ENCODE measurements at regions of chr2 and their contacts with region 1.

Region 1: GRCh38 chr2:88055371-88056128 is at the start of gene KRCC1:
- DNase-seq: peak; percentile 91 to 98
- ATAC-seq: peak; percentile 93 to 97 (median 94)
- H3K4me3 ChIP-seq: peak within 1 kb of the TSS; percentile 65
- H3K4me3 Mint-ChIP-seq: peak within 1 kb of the TSS; percentile 94
- H3K27ac ChIP-seq: peak within 1 kb of the TSS; percentile 87
- H3K27ac Mint-ChIP-seq: peak within 1 kb of the TSS; percentile 90 to 99
- H3K4me1 ChIP-seq: peaks cover 16% of the 10 kb centered on the region
- H3K4me1 Mint-ChIP-seq: peaks cover 41 to 42% of the 10 kb centered on the region in 2 donors
- H3K27me3 ChIP-seq: no peaks in the 10 kb centered on the region
- H3K27me3 Mint-ChIP-seq: no peaks in the 10 kb centered on the region
- CTCF ChIP-seq: no peak
- total RNA-seq, gene KRCC1: 9.0 to 17.0 (median 10.5) TPM

Region 2: DNA sequence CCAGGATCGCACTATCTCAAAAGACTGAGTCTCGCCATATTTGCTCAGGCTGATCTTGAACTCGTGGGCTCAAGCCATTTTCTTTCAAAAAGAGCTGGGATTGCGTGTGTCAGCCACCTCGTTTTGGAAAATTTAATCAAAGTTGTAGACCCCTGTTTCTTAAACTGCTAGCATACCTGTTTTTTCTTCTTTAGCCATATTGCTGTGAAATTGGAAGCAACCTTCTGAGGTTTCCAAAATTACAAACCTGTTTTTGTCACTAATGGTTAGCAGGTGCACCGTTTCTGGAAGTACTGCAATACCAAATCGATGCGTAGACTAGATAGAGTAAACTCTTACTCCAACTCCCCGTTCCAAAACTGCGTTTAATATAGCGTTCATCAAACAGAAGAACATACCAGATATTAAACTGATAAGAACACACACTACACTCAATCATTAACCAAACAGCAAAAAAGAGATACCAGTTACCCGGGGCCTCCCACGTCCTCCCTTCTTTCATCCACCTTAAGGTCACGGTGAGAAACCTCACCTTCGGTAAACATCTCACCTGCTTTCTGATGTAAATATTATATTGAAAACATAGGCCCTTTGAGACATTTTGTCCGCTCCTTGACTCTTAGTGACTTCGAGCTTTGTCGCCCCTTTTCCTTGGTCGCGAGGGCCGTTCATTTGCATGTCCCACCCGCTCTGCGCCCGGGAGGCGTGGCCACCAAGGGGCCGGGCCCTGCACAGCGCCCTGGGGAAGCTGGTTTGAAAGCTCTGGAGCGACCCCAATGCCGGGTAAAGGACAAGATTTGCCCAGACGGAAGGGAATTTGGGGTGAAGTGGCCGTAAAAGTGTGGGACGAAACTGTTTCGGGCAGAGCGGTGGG is 39.2 kb before region 1 on chr2 and contains the start of gene RNU2-63P:
- intact Hi-C with region 1: loop called (anchors 1 kb)
- DNase-seq: peak; percentile 83 to 89
- ATAC-seq: peak; percentile 79 to 91 (median 85)
- H3K4me3 ChIP-seq: peak within 1 kb of the TSS; percentile 75
- H3K4me3 Mint-ChIP-seq: peak within 1 kb of the TSS; percentile 98
- H3K27ac ChIP-seq: peak within 1 kb of the TSS; percentile 94
- H3K27ac Mint-ChIP-seq: peak within 1 kb of the TSS; percentile 97 to 98
- H3K4me1 ChIP-seq: peaks cover 8% of the 10 kb centered on the region
- H3K4me1 Mint-ChIP-seq: peaks cover 20 to 22% of the 10 kb centered on the region in 2 donors
- H3K27me3 ChIP-seq: no peaks in the 10 kb centered on the region
- H3K27me3 Mint-ChIP-seq: no peaks in the 10 kb centered on the region
- CTCF ChIP-seq: no peak
- total RNA-seq, gene RNU2-63P: 46.9 to 117 (median 48.3) TPM

Region 3: GRCh38 chr2:88159955-88160415 is 104.4 kb after region 1 on chr2:
- intact Hi-C with region 1: loop called (anchors 1 kb)
- DNase-seq: peak in 1 of 2 donors; percentile 79
- ATAC-seq: peak; percentile 66 to 76 (median 73)
- H3K4me3 ChIP-seq: no peak overlapping the region
- H3K4me3 Mint-ChIP-seq: no peak overlapping the region
- H3K27ac ChIP-seq: no peak overlapping the region
- H3K27ac Mint-ChIP-seq: no peak overlapping the region
- H3K4me1 ChIP-seq: no peaks in the 10 kb centered on the region
- H3K4me1 Mint-ChIP-seq: no peaks in the 10 kb centered on the region
- H3K27me3 ChIP-seq: no peaks in the 10 kb centered on the region
- H3K27me3 Mint-ChIP-seq: peaks cover 4 to 16% of the 10 kb centered on the region in 2 donors
- CTCF ChIP-seq: peak; percentile 87

Region 4: GRCh38 chr2:88239781-88240180 is 184.2 kb after region 1 on chr2:
- intact Hi-C with region 1: no loop called
- DNase-seq: peak; percentile 38 to 67
- ATAC-seq: peak; percentile 84 to 97 (median 91)
- H3K4me3 ChIP-seq: no peak overlapping the region
- H3K4me3 Mint-ChIP-seq: peak overlapping the region; percentile 82
- H3K27ac ChIP-seq: peak overlapping the region; percentile 60
- H3K27ac Mint-ChIP-seq: peak overlapping the region; percentile 81 to 90
- H3K4me1 ChIP-seq: peaks cover 19% of the 10 kb centered on the region
- H3K4me1 Mint-ChIP-seq: peaks cover 12 to 15% of the 10 kb centered on the region in 2 donors
- H3K27me3 ChIP-seq: no peaks in the 10 kb centered on the region
- H3K27me3 Mint-ChIP-seq: peaks cover 0 to 3% of the 10 kb centered on the region in 2 donors
- CTCF ChIP-seq: no peak

Region 5: DNA sequence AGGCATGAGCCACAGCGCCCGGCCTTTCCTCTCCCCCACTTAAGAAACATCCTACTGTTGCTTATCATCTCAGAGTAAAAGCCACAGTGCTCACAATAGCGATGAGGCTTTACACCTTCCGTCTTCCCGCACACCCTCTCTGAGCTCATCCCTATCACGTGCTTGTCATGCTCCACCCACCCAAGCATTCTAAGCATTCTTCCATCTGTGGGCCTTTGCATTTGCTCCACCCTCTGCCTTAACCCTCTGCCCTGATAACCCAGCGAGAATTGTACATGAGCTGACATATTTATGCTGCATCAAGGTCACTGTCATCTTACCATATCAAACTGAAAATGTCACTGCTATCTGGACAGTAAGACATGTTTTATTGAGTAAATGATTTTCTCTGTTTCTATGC is 374.4 kb after region 1 on chr2:
- intact Hi-C with region 1: no loop called
- DNase-seq: no peak
- ATAC-seq: no peak
- H3K4me3 ChIP-seq: no peak overlapping the region
- H3K4me3 Mint-ChIP-seq: no peak overlapping the region
- H3K27ac ChIP-seq: no peak overlapping the region
- H3K27ac Mint-ChIP-seq: no peak overlapping the region
- H3K4me1 ChIP-seq: no peaks in the 10 kb centered on the region
- H3K4me1 Mint-ChIP-seq: no peaks in the 10 kb centered on the region
- H3K27me3 ChIP-seq: no peaks in the 10 kb centered on the region
- H3K27me3 Mint-ChIP-seq: peaks cover 2 to 8% of the 10 kb centered on the region in 2 donors
- CTCF ChIP-seq: no peak

Measured in natural killer cell (primary cell).